ENCODE measurements at regions of chr17 and their contacts with region 1.

Region 1: GRCh38 chr17:43983515-43984411 is 20.7 kb upstream of the NAGS start:
- DNase-seq: peak in 1 of 2 experiments; percentile 34
- ATAC-seq: peak; percentile 67 to 77
- H3K4me3 ChIP-seq: peak overlapping the region; percentile 59
- H3K27ac ChIP-seq: peak overlapping the region; percentile 58 to 81; a peak in 5 of 6 replicates
- H3K4me1 ChIP-seq: 0 out of 3 replicates have a peak, but pooled peaks cover 8% of the 10 kb centered on the region
- CTCF ChIP-seq: peak; percentile 53
- EP300 ChIP-seq: no peak
- POLR2A ChIP-seq: no peak
- RAD21 ChIP-seq: no peak

Region 2: GRCh38 chr17:43907425-43907981 is 76.3 kb before region 1 on chr17 and contains the start of gene MPP2:
- CTCF ChIA-PET with region 1: interaction called, 13 read pairs
- POLR2A ChIA-PET with region 1: no interaction called
- DNase-seq: peak; percentile 71 to 80
- ATAC-seq: peak; percentile 49 to 77
- H3K4me3 ChIP-seq: peak within 1 kb of the TSS; percentile 46
- H3K27ac ChIP-seq: peak within 1 kb of the TSS; percentile 23 to 74; a peak in 4 of 6 replicates
- H3K4me1 ChIP-seq: peaks cover 24% of the 10 kb centered on the region
- CTCF ChIP-seq: no peak
- EP300 ChIP-seq: no peak
- POLR2A ChIP-seq: no peak
- RAD21 ChIP-seq: no peak
- polyA plus RNA-seq, gene MPP2: 3.8 and 4.1 TPM in 2 replicates

Region 3: GRCh38 chr17:43952717-43953666 is 30.8 kb before region 1 on chr17:
- CTCF ChIA-PET with region 1: interaction called, 657 read pairs
- POLR2A ChIA-PET with region 1: no interaction called
- DNase-seq: no peak
- ATAC-seq: peak in 1 of 2 experiments; percentile 13; a peak in 1 of 6 replicates
- H3K4me3 ChIP-seq: 0 out of 3 replicates have a peak overlapping the region, but pooled peaks have one; percentile 17
- H3K27ac ChIP-seq: no peak overlapping the region
- H3K4me1 ChIP-seq: peaks cover 7% of the 10 kb centered on the region; the same call in 2 of the 3 replicates
- CTCF ChIP-seq: no peak
- EP300 ChIP-seq: no peak
- POLR2A ChIP-seq: no peak
- RAD21 ChIP-seq: no peak

Region 4: DNA sequence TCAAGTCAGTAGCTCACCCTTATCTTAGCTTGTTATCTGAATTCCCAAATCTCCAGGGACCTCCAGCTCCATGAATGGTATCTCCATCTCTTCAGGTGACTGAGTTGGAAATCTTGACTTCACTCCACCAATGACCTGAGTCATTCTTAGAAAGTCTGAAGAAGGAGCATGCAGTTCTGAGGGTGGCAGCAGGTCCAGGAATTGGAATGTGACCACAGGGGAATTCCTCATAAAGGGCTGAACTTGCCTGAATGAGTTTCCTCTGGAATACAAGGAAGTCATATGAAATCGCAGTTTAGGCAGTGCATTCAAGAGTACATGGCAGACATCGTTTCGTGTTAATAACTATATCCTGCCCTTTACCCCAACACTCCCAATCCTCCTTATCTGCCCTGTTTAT is 17.5 kb before region 1 on chr17:
- CTCF ChIA-PET with region 1: interaction called, 35 read pairs
- POLR2A ChIA-PET with region 1: no interaction called
- DNase-seq: peak in 1 of 2 experiments; percentile 29
- ATAC-seq: peak; percentile 21 to 36; a peak in 3 of 6 replicates
- H3K4me3 ChIP-seq: no peak overlapping the region
- H3K27ac ChIP-seq: no peak overlapping the region
- H3K4me1 ChIP-seq: no peaks in the 10 kb centered on the region
- CTCF ChIP-seq: no peak
- EP300 ChIP-seq: no peak
- POLR2A ChIP-seq: no peak
- RAD21 ChIP-seq: no peak